GM10248 (cell line): ENCODE measurements at regions of chr18 and their contacts with region 1.

Region 1: DNA sequence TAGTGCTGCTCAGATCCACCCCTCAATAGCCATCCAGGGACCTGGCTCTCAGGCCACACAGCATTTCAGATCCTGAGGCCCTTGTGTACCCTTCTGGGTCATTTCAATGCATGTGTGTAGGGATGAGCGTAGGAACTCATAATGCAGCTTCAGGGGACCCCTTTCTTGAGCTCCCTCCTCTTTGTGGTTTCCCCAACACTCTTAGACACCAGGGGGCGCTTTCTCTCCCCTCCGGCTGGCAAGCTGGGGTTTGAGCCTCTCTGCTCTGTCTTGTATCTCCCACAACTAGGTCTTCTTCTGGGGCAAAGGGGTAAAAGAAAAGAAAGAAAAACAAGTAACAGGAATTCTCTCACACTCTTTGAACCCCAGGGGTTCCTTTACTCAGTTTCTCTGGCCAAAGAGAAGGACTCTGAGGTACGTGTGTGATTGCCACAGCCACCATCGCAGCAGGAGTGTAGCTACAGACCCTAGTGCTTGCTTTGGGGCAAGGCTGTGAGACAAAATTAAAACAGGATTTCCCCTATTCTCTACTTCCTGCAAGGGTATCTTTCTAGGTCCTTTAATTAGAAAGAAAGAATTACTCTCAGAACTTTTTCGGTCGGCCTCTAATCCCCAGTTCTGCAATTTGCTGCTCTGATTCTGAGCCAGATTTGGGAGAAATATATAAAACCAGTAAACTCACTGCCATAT is 38.0 kb downstream of the CABYR start:
- DNase-seq: peak; percentile 66
- CTCF ChIP-seq: peak; percentile 79

Region 2: GRCh38 chr18:23609390-23610023 is 567.4 kb before region 1 on chr18:
- CTCF ChIA-PET with region 1: no interaction called
- POLR2A ChIA-PET with region 1: no interaction called
- DNase-seq: no peak
- CTCF ChIP-seq: no peak

Region 3: DNA sequence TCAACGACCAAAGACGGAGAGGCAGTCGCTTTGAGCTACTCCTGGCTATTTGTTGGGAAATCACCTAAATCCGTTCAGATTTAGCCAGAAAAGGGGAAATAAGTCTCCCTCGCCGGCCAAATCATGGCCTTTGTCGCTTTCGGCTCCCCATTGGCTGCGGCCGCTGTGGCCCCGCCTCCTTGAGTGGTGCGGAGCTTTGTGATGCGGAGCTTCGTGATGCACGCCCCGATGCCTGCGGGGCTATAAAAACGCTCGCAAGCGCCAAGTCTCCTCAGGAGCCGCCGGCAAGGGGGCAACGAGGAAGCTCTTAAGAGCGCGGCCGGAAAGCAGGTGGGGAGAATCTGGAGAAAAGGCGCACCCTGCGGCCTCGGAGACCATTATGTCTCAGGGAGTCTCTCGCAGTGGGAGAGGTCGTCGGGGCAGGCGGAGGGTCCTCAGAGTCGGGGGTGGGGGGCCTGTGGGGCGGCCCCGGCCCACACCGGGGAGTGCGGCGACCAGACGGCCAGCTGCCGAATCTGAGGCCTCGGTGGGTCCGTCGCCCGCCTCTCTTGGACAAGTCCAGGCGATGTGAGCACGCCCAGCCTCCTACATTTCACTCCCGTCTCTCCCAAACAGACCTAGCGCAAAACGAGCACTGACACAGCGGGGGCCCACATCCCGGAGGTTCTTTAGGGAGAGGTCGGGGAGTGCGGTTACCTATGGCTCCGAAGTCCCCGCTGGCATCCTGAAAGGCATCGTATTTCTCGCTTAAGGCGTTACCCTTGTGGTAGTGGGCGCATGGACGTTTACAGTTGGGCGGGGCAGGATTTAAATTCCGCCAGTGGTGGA is 37.9 kb before region 1 on chr18 and contains the start of gene CABYR:
- CTCF ChIA-PET with region 1: interaction called, 10 read pairs
- POLR2A ChIA-PET with region 1: no interaction called
- DNase-seq: peak; percentile 77
- CTCF ChIP-seq: no peak

Region 4: DNA sequence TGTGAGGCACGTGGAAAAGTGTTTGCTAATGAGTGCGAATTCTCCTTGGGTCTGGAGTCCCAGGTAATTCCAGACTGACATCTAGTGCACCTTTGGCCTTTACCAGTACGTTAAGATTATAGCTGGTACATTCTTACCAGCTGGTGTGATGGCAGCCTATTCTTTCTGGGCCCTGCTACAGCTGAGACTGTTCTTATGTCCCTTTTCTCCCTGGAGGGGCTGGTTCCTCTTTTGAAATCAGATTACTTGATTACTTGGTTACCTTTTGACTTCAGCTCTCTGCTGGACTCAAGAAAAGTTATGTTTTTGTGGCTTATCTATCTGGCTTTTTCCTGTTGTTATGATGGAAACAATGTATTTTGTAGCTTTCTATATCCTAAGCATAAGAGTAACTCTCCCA is 23.5 kb before region 1 on chr18:
- CTCF ChIA-PET with region 1: interaction called, 12 read pairs
- POLR2A ChIA-PET with region 1: no interaction called
- DNase-seq: peak; percentile 36
- CTCF ChIP-seq: no peak

Region 5: DNA sequence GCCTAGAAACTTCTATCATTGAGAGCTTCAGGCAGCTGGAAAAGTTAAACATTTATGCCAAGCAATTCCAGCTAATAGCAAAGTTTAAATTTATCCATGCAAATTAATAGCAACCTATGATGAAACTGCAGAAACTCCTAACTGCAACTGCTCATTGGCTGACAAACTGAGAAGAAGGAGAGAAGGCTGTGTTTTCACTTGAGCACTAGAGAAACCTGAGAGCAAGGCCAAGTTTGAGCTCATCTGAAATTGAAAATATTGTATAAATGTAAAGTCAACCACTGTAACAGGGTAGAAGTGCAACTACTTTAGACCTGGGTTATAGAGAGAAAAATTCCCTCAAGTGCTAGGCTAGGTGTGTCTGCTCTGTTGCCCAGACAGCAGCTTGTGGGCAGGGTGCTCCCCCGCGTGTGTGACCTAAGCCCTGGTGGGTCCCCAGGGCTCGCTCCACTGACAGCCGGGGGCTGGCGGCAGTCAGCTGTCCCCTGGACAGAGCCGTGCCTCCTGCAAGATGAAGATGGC is 12.2 kb after region 1 on chr18:
- CTCF ChIA-PET with region 1: interaction called, 106 read pairs
- POLR2A ChIA-PET with region 1: no interaction called
- DNase-seq: peak; percentile 50
- CTCF ChIP-seq: no peak

Region 6: GRCh38 chr18:24704946-24705630 is 528.2 kb after region 1 on chr18:
- CTCF ChIA-PET with region 1: no interaction called
- POLR2A ChIA-PET with region 1: no interaction called
- DNase-seq: no peak
- CTCF ChIP-seq: no peak